Activated naive CD4-positive, alpha-beta T cell treated with anti-CD3 and anti-CD28 coated beads for 36 hours (primary cell): ENCODE measurements at regions of chr1 and their contacts with region 1.

Region 1: GRCh38 chr1:92951141-92951582 is 10.1 kb downstream of the DIPK1A start:
- DNase-seq: peak; percentile 48
- H3K4me3 Mint-ChIP-seq: no peak overlapping the region
- H3K27ac Mint-ChIP-seq: no peak overlapping the region
- H3K4me1 Mint-ChIP-seq: peaks cover 41% of the 10 kb centered on the region
- H3K27me3 Mint-ChIP-seq: no peaks in the 10 kb centered on the region

Region 2: DNA sequence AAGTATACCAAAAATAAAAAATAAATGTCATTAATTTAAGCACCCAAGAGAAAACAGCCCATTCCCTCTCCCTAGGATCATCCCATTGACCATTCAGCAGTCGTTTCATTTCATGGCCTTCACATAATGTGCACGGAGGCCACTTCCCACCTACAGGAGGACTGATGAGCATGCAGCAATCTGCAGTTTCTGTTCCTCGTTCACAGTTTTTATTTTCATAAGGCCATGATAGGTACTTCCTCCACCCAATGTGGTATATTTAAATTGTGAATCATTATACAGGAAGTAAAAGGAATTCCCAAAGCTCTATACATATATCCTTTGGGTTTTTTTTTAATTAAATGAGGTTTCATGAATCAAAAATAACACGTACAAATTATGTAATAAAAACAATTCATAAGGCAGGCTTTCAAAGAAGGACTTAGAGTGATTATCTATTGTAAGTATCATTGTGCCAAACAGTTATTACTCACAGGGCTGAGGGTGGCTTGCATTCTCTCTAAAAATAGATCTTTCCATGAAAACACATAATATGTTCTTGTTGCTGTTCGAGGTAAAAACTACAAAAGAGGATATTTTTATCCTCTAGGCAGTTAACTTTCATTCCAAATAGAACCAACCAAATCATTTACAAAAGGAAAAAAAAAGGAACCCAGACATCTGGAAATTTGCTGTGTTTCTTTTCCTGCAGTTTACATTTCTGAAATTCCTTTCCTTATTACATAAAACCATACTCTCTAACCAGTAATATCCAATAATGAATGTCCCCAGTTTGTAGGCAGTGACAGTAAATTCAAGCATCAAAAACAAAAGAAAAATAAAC is 1841.5 kb after region 1 on chr1:
- CTCF ChIA-PET with region 1: no interaction called
- intact Hi-C with region 1: loop called (anchors 10 kb)
- DNase-seq: no peak
- H3K4me3 Mint-ChIP-seq: no peak overlapping the region
- H3K27ac Mint-ChIP-seq: no peak overlapping the region
- H3K4me1 Mint-ChIP-seq: peaks cover 7% of the 10 kb centered on the region
- H3K27me3 Mint-ChIP-seq: no peaks in the 10 kb centered on the region